ENCODE measurements at regions of chr7 and their contacts with region 1.

Region 1: GRCh38 chr7:44163591-44163990 is 22.5 kb upstream of the MYL7 start:
- DNase-seq: peak; percentile 86 to 94
- H3K4me3 ChIP-seq: no peak overlapping the region
- H3K27ac ChIP-seq: 0 out of 2 replicates have a peak overlapping the region, but pooled peaks have one; percentile 30
- H3K4me1 ChIP-seq: peaks cover 25% of the 10 kb centered on the region
- H3K27me3 ChIP-seq: no peaks in the 10 kb centered on the region
- CTCF ChIP-seq: no peak

Region 2: GRCh38 chr7:43602271-43602670 is 561.3 kb before region 1 on chr7:
- CTCF ChIA-PET with region 1: no interaction called
- POLR2A ChIA-PET with region 1: interaction called, 10 read pairs
- intact Hi-C with region 1: no loop called
- DNase-seq: no peak
- H3K4me3 ChIP-seq: no peak overlapping the region
- H3K27ac ChIP-seq: no peak overlapping the region
- H3K4me1 ChIP-seq: no peaks in the 10 kb centered on the region
- H3K27me3 ChIP-seq: no peaks in the 10 kb centered on the region
- CTCF ChIP-seq: no peak

Region 3: GRCh38 chr7:44081266-44081748 is 82.3 kb before region 1 on chr7:
- CTCF ChIA-PET with region 1: no interaction called
- POLR2A ChIA-PET with region 1: no interaction called
- intact Hi-C with region 1: no loop called
- DNase-seq: no peak
- H3K4me3 ChIP-seq: peak overlapping the region; percentile 98
- H3K27ac ChIP-seq: peak overlapping the region; percentile 61; the same call in 1 of the 2 replicates
- H3K4me1 ChIP-seq: peaks cover 15% of the 10 kb centered on the region; the same call in 1 of the 2 replicates
- H3K27me3 ChIP-seq: no peaks in the 10 kb centered on the region
- CTCF ChIP-seq: no peak

Region 4: DNA sequence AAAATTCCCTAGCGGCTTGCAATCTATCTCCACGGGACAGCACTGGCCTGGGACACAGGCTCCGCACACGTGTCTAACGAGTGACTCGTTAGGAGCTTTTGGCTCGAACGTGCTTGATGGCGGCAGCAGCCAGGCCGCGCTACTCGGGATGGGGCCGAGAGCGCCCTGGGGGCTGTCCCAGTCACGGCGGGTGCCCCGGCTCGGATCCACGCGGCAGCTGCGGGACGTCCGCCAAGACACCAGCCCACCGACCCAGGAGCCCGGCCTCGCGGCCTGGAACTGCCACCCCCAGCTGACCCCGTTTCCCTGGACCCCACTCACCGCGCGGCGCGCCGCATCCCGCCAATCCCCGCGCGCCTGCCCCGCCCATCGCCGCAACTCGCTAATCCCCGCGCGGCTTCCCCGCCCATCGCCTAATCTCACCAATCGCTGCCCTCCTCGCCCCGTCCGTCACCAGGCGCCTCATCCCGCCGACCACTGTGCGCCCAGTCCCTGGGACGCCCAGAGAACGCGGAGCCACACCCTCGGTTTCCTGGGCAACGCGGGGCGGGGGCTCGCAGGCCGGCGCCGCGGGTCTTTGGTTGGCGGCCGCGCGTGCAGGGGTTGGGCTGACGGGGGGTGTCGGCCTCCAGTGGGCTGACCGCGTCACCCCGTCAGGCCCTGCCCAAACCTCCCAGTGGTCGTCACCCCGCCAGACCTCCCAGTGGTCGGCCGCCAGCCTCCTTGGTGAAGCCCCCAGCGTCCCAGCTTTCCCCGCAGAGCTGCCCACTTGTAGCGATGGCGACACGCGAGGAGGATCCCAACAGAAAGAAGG is 40.2 kb before region 1 on chr7 and contains the start of gene POLD2:
- CTCF ChIA-PET with region 1: no interaction called
- POLR2A ChIA-PET with region 1: interaction called, 4 read pairs
- intact Hi-C with region 1: loop called (anchors 5 kb)
- DNase-seq: peak; percentile 94 to 100
- H3K4me3 ChIP-seq: peak within 1 kb of the TSS; percentile 65
- H3K27ac ChIP-seq: peak within 1 kb of the TSS; percentile 1; the same call in 1 of the 2 replicates
- H3K4me1 ChIP-seq: peaks cover 11% of the 10 kb centered on the region
- H3K27me3 ChIP-seq: no peaks in the 10 kb centered on the region
- CTCF ChIP-seq: no peak
- total RNA-seq, gene POLD2: 217 and 249 TPM in 2 replicates

Region 5: DNA sequence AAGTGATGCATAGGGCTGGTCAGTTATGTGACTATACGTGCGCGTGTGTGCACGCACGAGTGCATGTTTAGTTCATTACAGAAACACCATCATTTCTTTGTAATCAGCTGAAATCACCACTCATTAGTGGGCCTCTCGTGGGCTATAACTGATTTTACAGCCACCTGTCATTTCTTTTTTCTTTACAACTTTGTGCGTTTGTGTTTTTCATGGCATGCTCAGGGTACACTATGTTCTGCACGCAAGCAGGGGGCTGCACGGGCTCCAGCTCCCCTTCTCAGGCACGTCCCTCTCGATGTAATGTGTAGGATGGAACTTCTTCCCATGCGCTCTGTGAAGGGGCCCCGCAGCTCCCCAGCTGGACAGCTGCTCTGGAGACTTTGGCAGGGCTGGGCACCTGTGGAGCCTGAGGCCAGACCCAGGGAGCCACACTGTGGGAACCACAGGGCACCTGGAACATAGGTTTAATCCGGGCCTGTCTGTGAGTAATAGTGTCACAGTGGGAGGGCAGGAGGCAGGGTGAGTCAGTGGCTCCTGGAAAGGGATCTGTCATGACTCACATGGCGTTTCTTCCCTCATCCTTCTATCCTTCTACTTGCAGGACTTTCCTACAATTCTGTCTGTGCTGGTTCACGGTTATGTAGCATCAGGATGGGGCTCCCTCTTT is 20.7 kb after region 1 on chr7:
- CTCF ChIA-PET with region 1: no interaction called
- POLR2A ChIA-PET with region 1: no interaction called
- intact Hi-C with region 1: loop called (anchors 1 kb)
- DNase-seq: peak; percentile 90 to 99
- H3K4me3 ChIP-seq: no peak overlapping the region
- H3K27ac ChIP-seq: peak overlapping the region; percentile 35
- H3K4me1 ChIP-seq: peaks cover 51% of the 10 kb centered on the region
- H3K27me3 ChIP-seq: no peaks in the 10 kb centered on the region
- CTCF ChIP-seq: no peak

Region 6: GRCh38 chr7:44218418-44219201 is 55.0 kb after region 1 on chr7:
- CTCF ChIA-PET with region 1: no interaction called
- POLR2A ChIA-PET with region 1: no interaction called
- intact Hi-C with region 1: no loop called
- DNase-seq: no peak
- H3K4me3 ChIP-seq: no peak overlapping the region
- H3K27ac ChIP-seq: no peak overlapping the region
- H3K4me1 ChIP-seq: no peaks in the 10 kb centered on the region
- H3K27me3 ChIP-seq: peaks cover 18% of the 10 kb centered on the region
- CTCF ChIP-seq: no peak